MCF 10A (cell line): ENCODE measurements at regions of chr1 and their contacts with region 1.

Region 1: DNA sequence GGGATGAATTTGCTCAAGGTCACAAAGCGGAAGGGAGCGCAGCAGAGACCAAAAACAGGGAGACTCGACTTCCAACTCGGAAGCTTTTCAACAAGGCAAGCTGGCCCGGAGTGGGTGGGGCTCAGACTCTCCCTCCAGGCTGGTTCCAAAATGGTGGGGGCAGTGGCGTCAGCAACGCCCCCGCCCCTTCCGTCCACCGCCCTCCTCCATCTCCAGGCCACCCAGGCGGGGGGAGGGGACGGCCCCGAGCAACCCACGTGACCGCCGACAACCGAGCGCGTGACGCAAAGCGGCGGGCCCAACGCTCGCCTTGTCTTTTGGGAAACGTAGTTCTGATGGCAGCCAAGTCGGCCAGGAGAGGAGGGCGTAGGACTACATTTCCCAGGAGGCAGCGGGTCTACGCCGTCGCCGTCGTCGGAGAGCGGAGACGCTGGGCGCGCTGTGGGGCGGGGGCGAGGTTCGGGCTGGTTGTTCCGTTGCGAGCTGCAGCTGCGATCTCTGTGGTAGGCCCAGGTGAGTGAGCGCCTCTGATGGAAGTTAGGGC is at the start of gene THRAP3:
- DNase-seq: peak; percentile 99
- H3K4me3 Mint-ChIP-seq: peak within 1 kb of the TSS; percentile 92
- H3K27ac Mint-ChIP-seq: peak within 1 kb of the TSS; percentile 98
- H3K4me1 Mint-ChIP-seq: peaks cover 26% of the 10 kb centered on the region
- H3K27me3 Mint-ChIP-seq: no peaks in the 10 kb centered on the region
- CTCF ChIP-seq: no peak
- total RNA-seq, gene THRAP3: 92.2 and 116 TPM in 2 replicates

Region 2: DNA sequence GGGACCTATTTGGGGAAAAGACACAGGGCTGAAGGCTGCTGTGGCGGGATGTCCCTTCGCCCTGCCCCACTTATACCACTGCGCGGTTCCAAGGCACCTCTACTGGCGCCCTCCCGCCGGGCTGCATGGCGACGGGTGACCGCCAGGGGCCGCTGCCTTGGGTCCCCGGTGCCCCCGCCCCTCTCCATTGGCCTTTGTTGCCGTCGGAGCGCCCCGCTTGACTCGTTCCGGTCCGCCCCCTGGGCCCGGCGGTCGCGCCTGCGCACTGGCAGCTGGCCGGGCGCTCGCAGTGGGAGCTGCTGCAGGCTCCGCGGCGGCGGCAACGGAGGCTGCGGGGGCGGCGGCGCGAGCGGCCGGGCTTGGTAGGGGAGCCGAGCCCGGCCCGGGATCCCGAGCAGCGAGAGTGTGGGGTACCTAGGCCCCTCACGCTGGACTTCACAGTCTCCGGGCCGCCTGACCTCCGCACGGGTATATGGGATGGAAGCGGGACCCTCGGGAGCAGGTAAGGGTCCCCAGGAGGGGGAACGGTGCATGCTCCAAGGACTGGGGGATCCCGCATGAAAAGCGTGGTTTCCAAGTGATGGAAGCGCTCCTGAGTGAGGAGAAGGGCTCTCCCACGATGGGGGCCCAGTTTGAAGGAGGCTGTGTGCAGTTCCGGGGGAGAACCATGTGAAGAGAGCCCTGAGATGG is 341.0 kb before region 1 on chr1 and contains the start of gene AGO1:
- CTCF ChIA-PET with region 1: no interaction called
- POLR2A ChIA-PET with region 1: no interaction called
- intact Hi-C with region 1: no loop called
- DNase-seq: peak; percentile 94
- H3K4me3 Mint-ChIP-seq: peak within 1 kb of the TSS; percentile 94
- H3K27ac Mint-ChIP-seq: peak within 1 kb of the TSS; percentile 90
- H3K4me1 Mint-ChIP-seq: peaks cover 18% of the 10 kb centered on the region
- H3K27me3 Mint-ChIP-seq: no peaks in the 10 kb centered on the region
- CTCF ChIP-seq: peak; percentile 88
- total RNA-seq, gene AGO1: 13.5 and 15.7 TPM in 2 replicates

Region 3: DNA sequence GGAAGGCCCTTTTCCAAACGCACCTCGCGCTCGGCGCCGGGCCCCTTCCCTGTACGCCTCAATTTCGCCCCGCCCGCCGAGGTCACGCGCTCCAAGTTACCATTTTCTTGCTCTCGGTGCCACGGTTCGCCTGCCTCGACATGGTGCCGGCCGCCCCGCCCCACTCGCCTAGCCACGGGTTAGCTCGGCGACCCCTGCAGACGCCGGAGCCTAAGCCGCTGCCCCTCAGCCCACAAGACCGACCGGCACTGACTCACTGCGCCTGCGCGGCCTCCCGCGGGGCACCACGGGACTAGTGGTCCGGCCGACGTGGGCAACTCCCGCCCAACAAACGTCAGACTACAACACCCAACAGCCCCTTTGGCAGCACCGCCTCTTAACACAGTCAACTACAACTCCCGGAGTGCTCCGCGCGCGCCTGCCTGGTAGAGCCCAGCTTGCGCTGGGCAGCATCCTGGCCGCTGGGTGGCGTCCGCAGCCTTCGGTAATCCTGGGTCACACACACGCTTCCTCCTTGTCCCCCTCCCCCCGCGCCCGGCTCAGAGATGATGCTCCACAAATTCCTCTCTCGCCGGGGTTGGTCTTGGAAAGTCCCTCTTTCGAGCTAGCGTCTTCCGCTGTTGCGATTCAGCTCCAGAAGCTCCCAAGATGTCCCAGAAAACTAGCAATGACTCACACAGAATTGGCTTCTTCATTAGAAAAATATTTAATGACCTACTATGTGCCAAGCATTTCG is 74.7 kb before region 1 on chr1 and contains the start of gene TRAPPC3:
- CTCF ChIA-PET with region 1: interaction called, 23 read pairs
- POLR2A ChIA-PET with region 1: interaction called, 59 read pairs
- intact Hi-C with region 1: loop called (anchors 1 kb)
- DNase-seq: peak; percentile 100
- H3K4me3 Mint-ChIP-seq: peak within 1 kb of the TSS; percentile 100
- H3K27ac Mint-ChIP-seq: peak within 1 kb of the TSS; percentile 100
- H3K4me1 Mint-ChIP-seq: peaks cover 24% of the 10 kb centered on the region
- H3K27me3 Mint-ChIP-seq: no peaks in the 10 kb centered on the region
- CTCF ChIP-seq: peak; percentile 91
- total RNA-seq, gene TRAPPC3: 72.8 and 75.5 TPM in 2 replicates

Region 4: GRCh38 chr1:36187800-36188593 is 36.1 kb before region 1 on chr1:
- CTCF ChIA-PET with region 1: interaction called, 28 read pairs
- POLR2A ChIA-PET with region 1: interaction called, 16 read pairs
- intact Hi-C with region 1: loop called (anchors 2 kb)
- DNase-seq: peak; percentile 91
- H3K4me3 Mint-ChIP-seq: no peak overlapping the region
- H3K27ac Mint-ChIP-seq: peak overlapping the region; percentile 43
- H3K4me1 Mint-ChIP-seq: peaks cover 15% of the 10 kb centered on the region
- H3K27me3 Mint-ChIP-seq: no peaks in the 10 kb centered on the region
- CTCF ChIP-seq: peak; percentile 85

Region 5: GRCh38 chr1:36239941-36240637 is 16.0 kb after region 1 on chr1:
- CTCF ChIA-PET with region 1: interaction called, 6 read pairs
- POLR2A ChIA-PET with region 1: interaction called, 72 read pairs
- intact Hi-C with region 1: no loop called
- DNase-seq: no peak
- H3K4me3 Mint-ChIP-seq: no peak overlapping the region
- H3K27ac Mint-ChIP-seq: no peak overlapping the region
- H3K4me1 Mint-ChIP-seq: peaks cover 13% of the 10 kb centered on the region
- H3K27me3 Mint-ChIP-seq: no peaks in the 10 kb centered on the region
- CTCF ChIP-seq: no peak

Region 6: DNA sequence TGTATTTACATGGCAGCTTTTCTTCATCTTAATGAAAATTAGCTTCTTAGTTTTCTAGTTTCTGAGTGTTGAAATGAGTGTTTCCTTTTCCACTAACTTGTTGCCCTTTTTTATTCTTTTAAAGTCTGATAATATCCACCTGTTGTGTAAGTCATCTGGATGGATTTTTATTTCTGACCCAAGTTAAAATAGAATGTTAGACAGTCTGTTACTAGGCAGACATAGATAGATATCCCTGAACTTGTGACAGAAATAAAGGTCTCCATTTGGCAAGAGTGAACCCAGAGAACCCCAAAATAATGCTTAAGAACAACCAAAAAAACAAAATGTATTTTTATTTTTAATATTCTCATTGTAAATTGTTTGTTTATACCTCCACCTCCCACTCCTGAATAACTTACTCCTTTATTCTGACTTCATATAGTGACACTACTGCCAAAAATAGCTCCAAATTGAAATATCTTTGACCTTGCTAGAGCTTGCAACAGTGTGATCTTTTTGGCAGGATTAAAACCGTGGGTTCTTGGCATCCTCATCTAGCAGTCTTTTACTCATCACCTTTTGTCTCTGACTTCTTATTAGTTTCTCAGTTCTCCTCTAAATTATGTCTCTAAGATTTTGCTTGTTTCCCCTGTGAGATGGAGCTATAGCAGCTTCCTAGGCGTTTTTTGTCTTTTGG is 55.2 kb after region 1 on chr1:
- CTCF ChIA-PET with region 1: interaction called, 9 read pairs
- POLR2A ChIA-PET with region 1: interaction called, 39 read pairs
- intact Hi-C with region 1: loop called (anchors 2 kb)
- DNase-seq: peak; percentile 45
- H3K4me3 Mint-ChIP-seq: no peak overlapping the region
- H3K27ac Mint-ChIP-seq: peak overlapping the region; percentile 24
- H3K4me1 Mint-ChIP-seq: peaks cover 16% of the 10 kb centered on the region
- H3K27me3 Mint-ChIP-seq: no peaks in the 10 kb centered on the region
- CTCF ChIP-seq: no peak

Region 7: GRCh38 chr1:36306902-36307456 is 82.9 kb after region 1 on chr1:
- CTCF ChIA-PET with region 1: no interaction called
- POLR2A ChIA-PET with region 1: interaction called, 18 read pairs
- intact Hi-C with region 1: no loop called
- DNase-seq: peak; percentile 93
- H3K4me3 Mint-ChIP-seq: peak overlapping the region; percentile 72
- H3K27ac Mint-ChIP-seq: no peak overlapping the region
- H3K4me1 Mint-ChIP-seq: peaks cover 6% of the 10 kb centered on the region
- H3K27me3 Mint-ChIP-seq: no peaks in the 10 kb centered on the region
- CTCF ChIP-seq: no peak

Region 8: DNA sequence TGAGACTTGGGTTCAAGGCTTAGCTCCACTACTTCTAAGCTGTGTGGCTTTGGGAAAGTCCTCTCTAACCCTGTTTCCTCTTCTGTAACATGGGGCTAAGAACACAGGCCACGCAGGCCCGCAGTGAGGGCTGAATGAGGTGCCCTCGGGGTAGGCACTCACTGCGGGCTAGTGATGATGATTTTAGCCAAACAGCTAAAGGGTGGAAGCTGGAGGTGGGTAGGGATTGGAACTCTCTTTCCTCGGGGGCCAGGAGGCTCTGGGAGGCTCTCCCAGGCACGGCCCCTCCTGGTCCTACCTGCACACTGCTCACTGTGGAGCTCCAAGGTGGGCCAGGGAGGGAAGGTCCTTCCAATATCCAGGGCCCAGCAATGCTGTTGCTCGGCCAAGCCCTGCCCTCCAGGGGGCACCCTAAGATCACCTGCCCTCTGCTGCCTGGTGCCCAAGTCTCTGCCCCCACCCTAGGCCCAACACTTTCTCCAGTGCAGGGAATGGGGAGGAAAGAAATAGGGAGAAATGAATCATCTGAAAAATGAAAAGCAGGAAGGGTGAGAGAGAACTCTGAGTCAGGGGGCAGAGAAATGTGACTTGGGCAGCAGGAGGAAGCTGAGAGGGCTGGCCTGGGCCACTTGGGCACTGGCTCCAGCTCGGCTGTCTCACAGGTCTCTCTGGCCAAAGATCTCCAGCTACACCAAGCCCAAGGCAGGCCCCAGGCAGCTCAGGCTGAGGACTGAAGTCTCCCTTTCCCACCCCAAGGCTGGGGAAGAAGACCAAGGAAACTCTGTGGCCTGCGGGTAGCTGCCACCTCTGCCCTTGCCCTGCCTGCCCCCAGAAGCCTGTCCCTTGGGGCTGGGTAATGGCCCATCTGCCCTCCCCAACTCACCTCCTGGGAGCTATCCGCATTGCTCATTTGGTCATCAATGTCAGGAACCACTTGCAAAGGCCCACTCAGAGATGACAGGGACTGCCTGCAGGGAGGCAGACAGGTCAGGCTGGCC is 118.7 kb after region 1 on chr1:
- CTCF ChIA-PET with region 1: no interaction called
- POLR2A ChIA-PET with region 1: no interaction called
- intact Hi-C with region 1: no loop called
- DNase-seq: peak; percentile 74
- H3K4me3 Mint-ChIP-seq: no peak overlapping the region
- H3K27ac Mint-ChIP-seq: peak overlapping the region; percentile 19
- H3K4me1 Mint-ChIP-seq: peaks cover 8% of the 10 kb centered on the region
- H3K27me3 Mint-ChIP-seq: no peaks in the 10 kb centered on the region
- CTCF ChIP-seq: peak; percentile 78

Region 9: GRCh38 chr1:36481771-36482629 is 257.9 kb after region 1 on chr1:
- CTCF ChIA-PET with region 1: no interaction called
- POLR2A ChIA-PET with region 1: no interaction called
- intact Hi-C with region 1: no loop called
- DNase-seq: no peak
- H3K4me3 Mint-ChIP-seq: no peak overlapping the region
- H3K27ac Mint-ChIP-seq: no peak overlapping the region
- H3K4me1 Mint-ChIP-seq: peaks cover 8% of the 10 kb centered on the region
- H3K27me3 Mint-ChIP-seq: peaks cover 8% of the 10 kb centered on the region
- CTCF ChIP-seq: no peak